Activated CD4-positive, alpha-beta T cell treated with anti-CD3 and anti-CD28 coated beads for 36 hours (primary cell): ENCODE measurements at regions of chr15 and their contacts with region 1.

Region 1: GRCh38 chr15:64443747-64444621 is 16.4 kb upstream of the ZNF609 start:
- DNase-seq: no peak
- ATAC-seq: peak; percentile 90
- H3K4me3 Mint-ChIP-seq: peak overlapping the region; percentile 61
- H3K27ac Mint-ChIP-seq: peak overlapping the region; percentile 93
- H3K4me1 Mint-ChIP-seq: peaks cover 63% of the 10 kb centered on the region
- H3K27me3 Mint-ChIP-seq: no peaks in the 10 kb centered on the region

Region 2: DNA sequence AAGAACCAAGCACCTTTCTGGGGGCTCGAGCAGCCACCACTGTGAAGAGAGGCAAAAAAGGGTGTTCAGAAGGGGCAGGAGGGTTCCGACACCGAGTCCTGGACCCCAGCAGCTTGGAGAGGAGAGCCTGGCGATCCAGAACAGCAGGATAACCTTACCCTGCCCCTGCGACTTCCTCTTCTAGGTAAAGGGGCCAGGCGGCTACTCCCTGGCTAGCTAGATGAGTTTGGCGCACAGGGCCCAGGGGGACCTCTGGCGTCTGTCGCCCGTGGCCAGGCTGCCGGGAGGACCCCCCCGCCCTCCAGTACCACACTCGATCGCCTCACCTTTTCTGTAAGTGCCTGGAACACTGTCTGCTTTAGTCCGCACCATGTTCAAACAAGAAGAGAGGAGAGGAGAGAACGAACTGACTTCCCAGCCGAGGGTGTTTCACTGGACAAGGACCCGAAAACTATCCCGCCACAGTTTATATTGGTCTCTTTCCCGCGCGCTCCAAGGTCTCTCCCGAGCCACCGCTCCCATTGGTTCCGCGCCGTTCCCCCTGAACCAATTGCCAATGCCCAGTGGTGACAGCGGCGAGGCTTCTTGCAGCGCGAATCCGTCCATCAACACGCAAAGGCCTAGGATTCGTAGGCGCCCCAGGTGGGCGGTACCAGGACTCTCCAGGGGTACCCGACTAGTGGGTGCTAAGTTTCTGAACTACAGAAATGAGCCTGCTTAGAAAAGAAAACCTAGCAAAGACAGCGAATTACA is 62.8 kb before region 1 on chr15 and contains the start of gene PCLAF:
- CTCF ChIA-PET with region 1: no interaction called
- POLR2A ChIA-PET with region 1: no interaction called
- intact Hi-C with region 1: loop called in 1 of 2 experiments (anchors 5 kb)
- DNase-seq: peak; percentile 97
- ATAC-seq: peak; percentile 99
- H3K4me3 Mint-ChIP-seq: peak within 1 kb of the TSS; percentile 97
- H3K27ac Mint-ChIP-seq: peak within 1 kb of the TSS; percentile 84
- H3K4me1 Mint-ChIP-seq: peaks cover 18% of the 10 kb centered on the region
- H3K27me3 Mint-ChIP-seq: no peaks in the 10 kb centered on the region
- total RNA-seq, gene PCLAF: 41.4 to 97.6 TPM

Region 3: DNA sequence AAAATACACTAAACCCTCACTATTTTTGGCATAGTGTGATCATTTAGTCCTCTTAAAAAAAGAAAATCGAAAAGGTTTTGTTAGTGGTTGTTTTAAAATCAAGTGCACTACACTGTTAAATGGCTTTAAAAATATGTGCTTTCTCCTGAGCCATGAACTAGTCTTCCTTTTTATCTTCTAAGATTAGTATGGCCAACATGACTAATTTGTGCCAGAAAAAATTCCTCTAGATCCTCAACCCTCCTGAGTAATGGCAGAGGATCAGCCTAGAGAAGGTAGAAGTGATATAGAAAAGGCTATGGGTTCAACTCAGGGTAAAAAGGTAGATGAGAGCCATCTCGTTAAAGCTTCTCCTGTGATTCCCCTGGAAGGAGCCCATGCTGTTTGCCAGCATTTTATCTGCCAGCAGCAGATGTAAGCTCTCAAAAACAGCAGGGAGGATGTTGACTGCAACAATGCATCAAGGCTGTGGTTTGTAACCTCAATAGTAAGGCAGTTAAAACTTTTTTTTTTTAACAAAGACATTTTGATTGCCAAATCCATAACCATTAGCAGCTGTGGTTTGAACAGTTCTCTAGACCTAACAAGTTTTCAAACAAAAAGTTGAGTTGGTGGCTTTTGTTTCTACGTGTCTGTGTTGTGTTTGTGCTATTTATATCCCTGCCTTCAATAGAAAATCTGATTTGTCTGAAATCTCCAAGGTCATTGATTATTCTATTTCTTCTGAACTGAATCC is 13.8 kb before region 1 on chr15:
- CTCF ChIA-PET with region 1: no interaction called
- POLR2A ChIA-PET with region 1: interaction called, 3 read pairs
- intact Hi-C with region 1: loop called in 1 of 2 experiments (anchors 1 kb)
- DNase-seq: peak; percentile 35
- ATAC-seq: peak; percentile 61
- H3K4me3 Mint-ChIP-seq: no peak overlapping the region
- H3K27ac Mint-ChIP-seq: peak overlapping the region; percentile 92
- H3K4me1 Mint-ChIP-seq: peaks cover 44% of the 10 kb centered on the region
- H3K27me3 Mint-ChIP-seq: no peaks in the 10 kb centered on the region

Region 4: DNA sequence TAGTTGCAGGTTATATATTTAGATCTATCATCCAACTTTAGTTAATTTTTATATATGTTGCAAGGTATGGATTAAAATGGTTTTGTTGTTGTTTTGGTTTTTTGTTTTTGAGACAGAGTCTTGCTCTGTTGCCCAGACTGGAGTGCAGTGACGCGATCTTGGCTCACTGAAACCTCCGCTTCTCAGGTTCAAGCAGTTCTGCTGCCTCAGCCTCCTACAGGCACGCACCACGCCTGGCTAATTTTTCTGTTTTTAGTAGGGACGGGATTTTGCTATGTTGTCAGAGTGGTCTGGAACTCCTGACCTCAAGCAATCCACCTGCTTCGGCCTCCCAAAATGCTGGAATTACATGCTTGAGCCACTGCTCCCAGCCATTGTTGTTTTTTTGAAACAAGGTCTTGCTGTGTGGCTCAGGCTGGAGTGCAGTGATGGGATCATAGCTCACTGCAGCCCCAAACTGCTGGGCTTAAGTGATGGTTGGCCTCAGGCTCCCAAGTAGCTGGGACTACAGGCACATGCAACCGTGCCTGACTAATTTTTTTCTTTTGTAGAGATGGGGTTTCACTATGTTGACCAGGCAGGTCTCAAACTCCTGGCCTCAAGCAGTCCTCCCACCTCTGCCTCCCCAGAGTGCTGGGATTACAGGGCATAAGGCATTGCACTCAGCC is 108.4 kb after region 1 on chr15:
- CTCF ChIA-PET with region 1: no interaction called
- POLR2A ChIA-PET with region 1: no interaction called
- intact Hi-C with region 1: no loop called
- DNase-seq: no peak
- ATAC-seq: no peak
- H3K4me3 Mint-ChIP-seq: no peak overlapping the region
- H3K27ac Mint-ChIP-seq: no peak overlapping the region
- H3K4me1 Mint-ChIP-seq: peaks cover 36% of the 10 kb centered on the region
- H3K27me3 Mint-ChIP-seq: no peaks in the 10 kb centered on the region

Region 5: DNA sequence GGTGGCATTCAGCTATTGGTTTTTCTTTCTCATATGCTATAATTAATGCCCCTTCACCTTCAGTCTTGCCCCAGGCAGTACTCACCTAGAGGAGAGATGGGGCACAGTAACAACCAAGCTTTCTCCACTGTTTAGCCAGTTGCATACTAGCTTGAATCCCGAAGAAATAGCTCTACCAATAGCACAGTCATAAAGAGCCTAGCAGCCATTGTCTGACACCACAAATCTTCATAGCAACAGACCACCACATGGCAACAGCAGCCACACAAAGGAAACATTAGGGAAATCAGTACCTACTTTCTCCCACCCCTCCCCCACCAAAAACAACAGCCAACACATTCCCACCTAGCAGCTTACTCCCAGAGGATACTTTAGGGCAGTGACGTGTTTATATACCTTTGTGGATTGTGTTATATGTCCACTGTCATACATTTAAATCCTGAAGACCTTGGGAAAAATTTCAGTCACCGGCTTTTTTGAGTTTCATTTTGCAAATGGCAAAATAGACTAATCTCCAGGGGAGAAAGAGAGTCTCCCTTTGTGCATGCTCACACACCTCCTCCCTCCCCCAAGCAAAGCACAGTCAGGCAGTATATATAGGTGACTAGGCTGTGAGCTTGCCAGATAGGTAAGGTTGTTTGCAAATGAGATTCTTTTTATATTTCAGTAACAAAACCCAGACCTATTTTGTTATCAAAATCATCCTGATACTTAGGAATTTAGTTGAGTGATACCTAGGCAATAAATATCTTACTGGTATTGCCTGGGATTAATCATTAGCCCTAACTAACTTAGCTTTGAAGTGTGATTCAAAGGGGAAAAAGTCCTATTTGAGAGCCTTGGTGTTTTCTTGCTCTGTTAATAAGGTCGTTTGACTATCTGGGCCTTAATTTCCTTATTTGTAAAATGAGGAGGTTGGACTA is 190.9 kb after region 1 on chr15:
- CTCF ChIA-PET with region 1: no interaction called
- POLR2A ChIA-PET with region 1: interaction called, 3 read pairs
- intact Hi-C with region 1: loop called in 1 of 2 experiments (anchors 1 kb)
- DNase-seq: peak; percentile 56
- ATAC-seq: peak; percentile 65
- H3K4me3 Mint-ChIP-seq: peak overlapping the region; percentile 2
- H3K27ac Mint-ChIP-seq: peak overlapping the region; percentile 74
- H3K4me1 Mint-ChIP-seq: peaks cover 61% of the 10 kb centered on the region
- H3K27me3 Mint-ChIP-seq: no peaks in the 10 kb centered on the region

Region 6: DNA sequence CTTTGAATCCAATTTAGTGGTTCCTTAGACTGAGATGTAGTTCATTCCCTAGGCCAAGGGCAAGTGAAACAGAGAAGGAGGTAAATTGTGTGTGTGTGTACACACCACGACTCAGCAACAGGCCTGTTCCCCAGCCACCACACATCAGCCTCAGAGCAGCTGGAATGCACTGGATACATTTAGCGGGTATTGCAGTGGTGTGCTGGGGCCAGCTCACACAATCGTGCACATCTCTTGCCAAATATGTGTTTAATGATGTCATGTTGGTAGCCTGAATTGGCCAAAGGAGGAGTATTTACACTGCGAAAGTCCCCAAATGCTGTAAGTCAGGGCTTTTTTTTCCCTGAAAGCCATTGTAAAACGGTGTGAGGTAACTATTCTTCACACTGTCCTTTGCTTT is 249.2 kb after region 1 on chr15:
- CTCF ChIA-PET with region 1: no interaction called
- POLR2A ChIA-PET with region 1: interaction called, 3 read pairs
- intact Hi-C with region 1: loop called in 1 of 2 experiments (anchors 1 kb)
- DNase-seq: no peak
- ATAC-seq: no peak
- H3K4me3 Mint-ChIP-seq: no peak overlapping the region
- H3K27ac Mint-ChIP-seq: peak overlapping the region; percentile 70
- H3K4me1 Mint-ChIP-seq: peaks cover 34% of the 10 kb centered on the region
- H3K27me3 Mint-ChIP-seq: no peaks in the 10 kb centered on the region